GM10248 (cell line): ENCODE measurements at regions of chr3 and their contacts with region 1.

Region 1: DNA sequence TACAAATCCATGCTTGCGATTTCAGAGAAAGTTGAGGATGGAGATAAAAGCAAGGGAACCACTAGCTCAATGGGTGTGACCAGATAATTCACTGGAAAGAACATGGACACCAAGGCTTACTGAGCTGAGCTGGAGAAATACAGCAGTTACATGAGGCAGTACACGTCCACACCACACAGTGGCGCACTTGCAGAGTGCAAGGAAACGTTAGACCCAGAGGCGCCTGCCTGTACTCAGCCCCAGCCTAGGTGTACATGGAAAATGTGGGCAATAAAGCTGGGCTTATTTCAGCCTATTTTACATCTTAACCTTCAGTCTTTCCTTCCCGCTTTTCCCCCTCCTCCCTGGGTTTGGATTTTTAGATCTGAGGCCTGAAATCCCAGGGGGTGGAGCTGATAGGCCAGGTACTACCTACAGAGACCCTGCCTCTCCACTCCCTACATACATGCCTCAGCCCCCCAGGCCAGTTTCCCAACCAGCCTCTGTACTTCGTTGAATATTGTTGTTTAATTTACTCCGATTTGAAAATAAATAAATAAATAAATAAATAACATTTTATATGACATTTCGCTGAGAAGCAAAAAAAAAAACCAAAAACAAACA is 60.1 kb downstream of the PCOLCE2 start:
- DNase-seq: peak; percentile 71
- CTCF ChIP-seq: peak; percentile 88

Region 2: DNA sequence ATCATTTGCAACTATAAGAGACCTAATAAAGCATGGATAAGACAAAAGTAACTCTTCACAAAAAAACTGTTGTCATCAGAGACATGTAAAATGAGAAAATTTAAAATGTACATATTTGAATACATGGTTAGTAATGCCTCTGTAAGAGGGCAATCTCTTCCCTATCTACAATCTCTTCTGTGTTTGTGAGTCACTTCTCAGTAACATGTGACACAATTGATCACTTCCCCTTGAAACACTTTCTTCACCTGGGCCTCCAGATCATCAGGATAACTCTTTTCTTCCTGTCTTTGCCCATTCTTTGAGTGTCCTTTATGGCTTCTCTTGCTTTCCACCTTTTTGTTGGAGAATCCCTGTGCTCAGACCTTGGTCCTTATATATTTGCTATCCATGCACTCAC is 729.8 kb before region 1 on chr3:
- CTCF ChIA-PET with region 1: no interaction called
- POLR2A ChIA-PET with region 1: no interaction called
- DNase-seq: no peak
- CTCF ChIP-seq: no peak

Region 3: GRCh38 chr3:142808103-142808917 is 20.5 kb before region 1 on chr3:
- CTCF ChIA-PET with region 1: interaction called, 79 read pairs
- POLR2A ChIA-PET with region 1: no interaction called
- DNase-seq: no peak
- CTCF ChIP-seq: no peak

Region 4: DNA sequence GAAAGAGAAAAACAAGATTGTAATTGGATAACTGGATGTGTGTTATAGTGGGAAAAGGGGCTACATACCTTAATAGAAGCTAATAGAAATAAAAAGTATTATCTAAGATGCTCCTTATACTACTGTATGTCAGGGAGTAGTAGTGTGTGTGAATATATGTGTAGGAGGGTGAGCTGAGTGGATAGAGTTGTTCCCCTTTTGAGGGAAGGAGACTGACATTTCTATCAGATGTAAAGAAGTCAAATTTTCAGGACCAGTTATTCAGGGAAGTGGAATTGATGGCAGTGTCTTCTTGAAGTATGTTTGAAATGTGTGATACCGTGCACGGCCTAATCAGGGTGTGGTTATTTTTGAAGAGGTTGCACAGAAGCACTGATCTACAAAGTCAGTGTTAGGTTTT is 11.0 kb after region 1 on chr3:
- CTCF ChIA-PET with region 1: interaction called, 35 read pairs
- POLR2A ChIA-PET with region 1: no interaction called
- DNase-seq: no peak
- CTCF ChIP-seq: no peak

Region 5: DNA sequence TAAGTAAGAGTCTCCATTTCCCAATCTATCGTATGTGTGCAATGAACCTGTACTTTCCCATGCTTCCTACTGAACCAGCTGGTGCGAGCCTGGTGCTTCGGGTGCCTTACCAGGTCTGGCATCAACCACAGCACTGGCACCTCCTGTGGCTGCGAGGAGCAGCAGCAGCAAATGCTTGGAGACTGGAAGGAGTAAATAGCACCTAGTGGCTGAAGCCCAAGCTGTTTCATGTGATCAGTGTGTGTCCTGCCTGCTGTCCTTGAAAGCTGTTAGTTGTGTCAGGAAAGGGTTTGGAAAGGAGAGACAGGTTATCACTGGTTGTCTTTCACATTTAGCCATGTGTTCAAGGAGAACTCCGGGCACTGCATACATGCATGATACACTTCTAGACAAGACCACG is 28.3 kb after region 1 on chr3:
- CTCF ChIA-PET with region 1: interaction called, 19 read pairs
- POLR2A ChIA-PET with region 1: no interaction called
- DNase-seq: no peak
- CTCF ChIP-seq: no peak

Region 6: GRCh38 chr3:142940483-142940882 is 111.7 kb after region 1 on chr3:
- CTCF ChIA-PET with region 1: interaction called, 12 read pairs
- POLR2A ChIA-PET with region 1: no interaction called
- DNase-seq: no peak
- CTCF ChIP-seq: no peak

Region 7: DNA sequence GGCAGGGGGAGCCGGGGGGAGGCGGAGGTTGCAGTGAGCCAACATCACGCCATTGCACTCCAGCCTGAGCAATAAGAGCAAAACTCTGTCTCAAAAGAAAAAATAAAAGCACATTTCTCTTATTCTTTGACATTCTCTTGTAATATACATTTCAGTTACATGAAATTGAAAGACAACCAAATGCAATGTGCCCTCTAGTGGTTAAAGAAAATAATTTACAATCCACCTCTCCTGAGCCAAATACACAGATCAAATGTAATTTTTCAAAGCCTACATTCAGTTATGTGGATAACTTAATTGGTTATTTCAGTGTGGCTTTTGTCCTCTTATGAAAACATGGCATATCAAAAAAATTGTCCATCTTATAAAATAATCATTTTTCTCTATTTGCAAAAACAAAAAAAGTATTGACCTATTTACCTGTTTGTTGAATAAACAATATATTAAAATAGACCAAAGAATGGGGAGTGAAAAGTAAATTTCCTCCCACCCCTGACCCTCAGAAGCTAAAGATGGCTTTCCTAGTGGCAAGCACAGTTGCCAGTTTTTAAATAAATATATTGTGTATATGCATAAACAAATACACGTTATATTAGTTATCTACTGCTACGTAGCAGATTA is 158.4 kb after region 1 on chr3:
- CTCF ChIA-PET with region 1: interaction called, 130 read pairs
- POLR2A ChIA-PET with region 1: no interaction called
- DNase-seq: peak; percentile 60
- CTCF ChIP-seq: peak; percentile 62

Region 8: GRCh38 chr3:143001369-143002082 is 172.7 kb after region 1 on chr3 and contains the start of gene U2SURP:
- CTCF ChIA-PET with region 1: interaction called, 130 read pairs
- POLR2A ChIA-PET with region 1: no interaction called
- DNase-seq: peak; percentile 96
- CTCF ChIP-seq: no peak

Region 9: GRCh38 chr3:143182866-143183664 is 354.3 kb after region 1 on chr3:
- CTCF ChIA-PET with region 1: no interaction called
- POLR2A ChIA-PET with region 1: no interaction called
- DNase-seq: no peak
- CTCF ChIP-seq: no peak

Region 10: DNA sequence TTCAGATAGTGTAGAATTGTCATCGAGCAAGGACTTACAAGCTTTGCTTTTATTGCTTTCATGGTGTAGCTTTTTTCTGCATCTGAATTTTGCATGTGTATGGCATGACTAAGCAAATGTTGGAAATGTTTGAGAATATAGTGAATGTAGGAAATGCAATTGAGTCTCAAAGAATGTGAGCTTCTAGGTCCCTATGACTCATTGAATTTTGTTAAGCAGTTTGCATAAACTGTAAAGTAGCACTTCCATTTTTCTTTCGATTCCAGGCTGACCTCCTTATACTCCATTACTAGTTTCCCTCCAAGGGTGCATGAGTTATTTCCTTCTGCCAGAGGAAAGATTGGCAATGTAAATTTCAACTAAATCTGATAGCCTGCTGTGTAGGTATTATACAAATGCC is 1762.0 kb after region 1 on chr3:
- CTCF ChIA-PET with region 1: no interaction called
- POLR2A ChIA-PET with region 1: no interaction called
- DNase-seq: no peak
- CTCF ChIP-seq: no peak